Caco-2 (cell line): ENCODE measurements at regions of chr2 and their contacts with region 1.

Region 1: GRCh38 chr2:121076885-121077549 is 208.0 kb downstream of the TFCP2L1 start:
- DNase-seq: peak; percentile 82 to 90
- H3K4me3 ChIP-seq: no peak overlapping the region
- H3K4me3 Mint-ChIP-seq: no peak overlapping the region
- H3K27ac Mint-ChIP-seq: no peak overlapping the region
- H3K4me1 ChIP-seq: peaks cover 20% of the 10 kb centered on the region
- H3K4me1 Mint-ChIP-seq: no peaks in the 10 kb centered on the region
- H3K27me3 ChIP-seq: no peaks in the 10 kb centered on the region
- H3K27me3 Mint-ChIP-seq: no peaks in the 10 kb centered on the region
- CTCF ChIP-seq: peak; percentile 97 to 98

Region 2: GRCh38 chr2:120735746-120736170 is 341.3 kb before region 1 on chr2 and contains the start of gene GLI2:
- CTCF ChIA-PET with region 1: interaction called, 3 read pairs
- POLR2A ChIA-PET with region 1: interaction called, 3 read pairs
- intact Hi-C with region 1: loop called (anchors 2 kb)
- DNase-seq: peak; percentile 78 to 85
- H3K4me3 ChIP-seq: peak within 1 kb of the TSS; percentile 39
- H3K4me3 Mint-ChIP-seq: peak within 1 kb of the TSS; percentile 84
- H3K27ac Mint-ChIP-seq: no peak within 1 kb of the TSS
- H3K4me1 ChIP-seq: peaks cover 3% of the 10 kb centered on the region; the same call in 1 of the 2 replicates
- H3K4me1 Mint-ChIP-seq: peaks cover 9% of the 10 kb centered on the region
- H3K27me3 ChIP-seq: 0 out of 2 replicates have a peak, but pooled peaks cover 3% of the 10 kb centered on the region
- H3K27me3 Mint-ChIP-seq: peaks cover 21% of the 10 kb centered on the region
- CTCF ChIP-seq: peak; percentile 74 to 75
- total RNA-seq, gene GLI2: 0.58 and 0.70 TPM in 2 replicates

Region 3: DNA sequence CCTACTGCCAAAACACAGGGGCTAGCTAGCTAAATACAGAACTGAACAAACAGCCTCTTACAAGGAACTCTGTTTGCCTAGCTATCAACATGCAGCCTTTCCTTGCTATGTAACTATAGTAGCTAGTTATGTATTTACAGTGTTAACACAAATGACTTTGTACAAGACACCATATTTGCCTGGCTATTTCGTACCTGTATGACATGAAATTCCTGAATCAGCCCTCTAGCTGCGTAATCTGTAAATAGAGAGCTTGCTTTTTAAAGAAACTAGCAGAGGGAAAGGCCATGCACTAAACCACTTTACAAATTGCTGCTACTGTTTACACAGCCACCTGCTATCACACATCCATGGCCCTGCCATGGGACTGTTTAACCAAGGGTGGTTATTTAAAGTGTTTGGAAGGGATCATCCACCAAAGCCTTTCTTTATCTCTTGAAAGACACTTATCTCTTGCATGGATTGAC is 40.8 kb before region 1 on chr2:
- CTCF ChIA-PET with region 1: interaction called, 9 read pairs
- POLR2A ChIA-PET with region 1: interaction called, 42 read pairs
- intact Hi-C with region 1: loop called (anchors 2 kb)
- DNase-seq: peak; percentile 88
- H3K4me3 ChIP-seq: no peak overlapping the region
- H3K4me3 Mint-ChIP-seq: no peak overlapping the region
- H3K27ac Mint-ChIP-seq: no peak overlapping the region
- H3K4me1 ChIP-seq: peaks cover 15% of the 10 kb centered on the region
- H3K4me1 Mint-ChIP-seq: peaks cover 22% of the 10 kb centered on the region
- H3K27me3 ChIP-seq: peaks cover 10% of the 10 kb centered on the region
- H3K27me3 Mint-ChIP-seq: peaks cover 27% of the 10 kb centered on the region
- CTCF ChIP-seq: no peak

Region 4: DNA sequence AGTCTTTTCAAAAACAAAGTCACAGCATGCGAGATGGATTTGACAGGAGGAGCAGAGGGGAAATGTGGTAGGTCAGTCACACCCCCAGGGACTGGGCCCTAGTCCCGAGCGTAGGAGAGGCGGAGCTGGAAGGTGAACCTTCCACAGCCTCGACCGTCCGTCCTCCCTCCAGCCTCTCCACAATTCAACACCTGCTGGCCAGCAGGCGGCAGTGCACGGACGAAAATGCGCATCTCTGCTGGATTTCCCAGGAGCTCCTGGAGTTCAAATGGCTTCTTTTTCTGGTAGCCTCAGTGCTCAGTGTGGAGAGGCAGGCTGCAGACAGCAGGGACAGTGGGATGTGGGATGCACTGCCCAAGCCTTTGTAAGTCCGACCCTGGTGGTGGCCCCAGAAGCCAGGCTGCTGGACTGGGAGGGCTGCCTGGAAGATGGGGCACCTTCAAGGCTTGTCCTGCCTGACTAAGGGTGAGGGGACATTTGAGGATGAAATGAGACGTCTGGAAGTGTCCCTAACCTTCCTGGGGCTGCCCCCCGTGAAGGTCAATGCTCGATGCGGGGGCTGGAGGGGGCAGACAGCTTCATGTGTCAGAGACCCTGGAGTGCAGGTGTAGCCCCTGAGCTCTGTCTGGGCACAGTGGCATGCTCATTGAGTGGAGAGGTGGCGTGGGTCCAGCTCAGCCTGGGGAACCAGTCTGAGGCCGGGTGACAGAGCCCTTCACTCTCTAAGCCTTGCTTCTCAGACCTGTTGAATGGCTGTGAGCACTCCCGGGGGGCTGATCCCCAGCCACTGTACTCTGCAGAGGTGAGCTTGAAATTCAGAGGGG is 18.5 kb after region 1 on chr2:
- CTCF ChIA-PET with region 1: interaction called, 6 read pairs
- POLR2A ChIA-PET with region 1: interaction called, 12 read pairs
- intact Hi-C with region 1: no loop called
- DNase-seq: peak; percentile 57 to 75
- H3K4me3 ChIP-seq: no peak overlapping the region
- H3K4me3 Mint-ChIP-seq: no peak overlapping the region
- H3K27ac Mint-ChIP-seq: no peak overlapping the region
- H3K4me1 ChIP-seq: peaks cover 5% of the 10 kb centered on the region; the same call in 1 of the 2 replicates
- H3K4me1 Mint-ChIP-seq: peaks cover 7% of the 10 kb centered on the region
- H3K27me3 ChIP-seq: no peaks in the 10 kb centered on the region
- H3K27me3 Mint-ChIP-seq: no peaks in the 10 kb centered on the region
- CTCF ChIP-seq: peak; percentile 55 to 74